WTC11 (cell line): ENCODE measurements at regions of chr12 and their contacts with region 1.

Region 1: GRCh38 chr12:121483949-121484348 is 84.0 kb downstream of the RNF34 start:
- DNase-seq: peak; percentile 17
- ATAC-seq: peak; percentile 38; the same call in 1 of the 2 replicates
- H3K4me3 Mint-ChIP-seq: no peak overlapping the region
- H3K27ac Mint-ChIP-seq: peak overlapping the region; percentile 44
- H3K4me1 Mint-ChIP-seq: peaks cover 8% of the 10 kb centered on the region
- H3K27me3 Mint-ChIP-seq: no peaks in the 10 kb centered on the region
- CTCF ChIP-seq: no peak

Region 2: DNA sequence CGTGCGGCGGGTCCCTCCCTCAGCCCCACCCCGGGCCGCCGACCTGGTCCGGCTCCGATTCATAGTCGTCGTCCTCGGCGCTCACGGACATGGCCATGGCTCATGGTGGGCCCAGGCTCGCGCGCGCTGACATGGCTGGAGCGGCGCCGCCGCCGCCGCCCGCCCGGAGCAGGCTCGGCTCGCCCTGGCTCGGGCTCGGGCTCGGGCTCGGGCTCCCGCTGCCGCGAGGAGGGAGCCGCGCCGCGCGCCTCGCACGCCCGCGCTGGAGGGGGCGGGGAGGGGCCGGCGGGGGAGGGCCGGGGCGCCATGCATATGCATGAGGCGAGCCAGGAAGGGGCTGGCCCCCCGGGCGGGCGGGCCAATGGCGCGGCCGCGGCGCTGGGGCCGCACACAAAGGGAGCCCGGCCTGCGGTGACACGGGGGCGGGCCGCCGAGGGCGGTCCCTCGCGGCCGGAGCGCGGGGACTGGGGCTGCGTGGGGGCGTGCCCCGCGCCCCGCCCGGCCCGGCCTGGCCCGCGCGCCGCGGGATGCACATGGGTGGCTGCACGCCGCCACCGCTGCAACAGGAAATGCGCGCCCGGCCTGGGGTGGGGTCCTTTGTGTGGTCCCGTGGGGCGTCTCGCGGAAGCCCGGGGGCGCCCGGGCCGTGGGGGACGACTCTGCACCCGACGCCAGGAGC is 16.7 kb before region 1 on chr12:
- CTCF ChIA-PET with region 1: interaction called, 43 read pairs
- POLR2A ChIA-PET with region 1: interaction called, 3 read pairs
- DNase-seq: peak; percentile 89
- ATAC-seq: peak; percentile 83
- H3K4me3 Mint-ChIP-seq: peak overlapping the region; percentile 56
- H3K27ac Mint-ChIP-seq: no peak overlapping the region
- H3K4me1 Mint-ChIP-seq: peaks cover 36% of the 10 kb centered on the region
- H3K27me3 Mint-ChIP-seq: no peaks in the 10 kb centered on the region
- CTCF ChIP-seq: no peak

Region 3: DNA sequence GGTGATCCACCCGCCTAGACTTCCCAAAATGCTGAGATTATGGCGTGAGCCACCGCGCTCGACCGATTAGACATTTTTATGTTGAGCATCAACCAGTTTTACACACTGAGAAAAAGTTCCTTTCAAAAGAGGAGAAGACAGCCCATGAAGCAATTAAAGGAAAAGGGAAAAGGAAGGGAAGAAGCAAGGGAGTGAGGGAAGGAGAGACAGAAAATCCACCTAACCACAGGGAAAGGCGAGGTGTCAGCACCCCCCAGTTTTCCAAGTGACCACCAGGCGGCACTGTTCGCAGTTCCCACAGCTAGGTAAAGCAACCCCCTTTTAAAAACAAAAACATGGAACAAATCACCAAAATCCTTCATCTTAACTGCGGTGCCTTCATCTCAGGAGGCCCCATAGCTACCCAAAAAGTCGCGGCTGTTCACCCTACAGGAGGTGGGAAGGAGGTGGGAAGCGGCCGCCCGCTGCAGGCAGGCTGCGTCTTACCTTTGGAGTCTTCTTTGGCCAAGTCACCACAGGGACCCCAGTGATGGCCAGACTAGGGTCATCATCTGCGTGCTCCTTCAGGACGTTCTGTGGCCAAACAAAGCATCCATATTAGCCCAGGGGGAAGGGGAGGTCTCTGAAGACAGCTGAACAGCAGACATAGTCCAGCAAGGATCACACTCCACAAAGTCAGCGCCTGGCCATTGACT is 10.3 kb after region 1 on chr12:
- CTCF ChIA-PET with region 1: interaction called, 13 read pairs
- POLR2A ChIA-PET with region 1: no interaction called
- DNase-seq: peak; percentile 84
- ATAC-seq: peak; percentile 78
- H3K4me3 Mint-ChIP-seq: no peak overlapping the region
- H3K27ac Mint-ChIP-seq: peak overlapping the region; percentile 88
- H3K4me1 Mint-ChIP-seq: peaks cover 17% of the 10 kb centered on the region
- H3K27me3 Mint-ChIP-seq: no peaks in the 10 kb centered on the region
- CTCF ChIP-seq: peak; percentile 90

Region 4: DNA sequence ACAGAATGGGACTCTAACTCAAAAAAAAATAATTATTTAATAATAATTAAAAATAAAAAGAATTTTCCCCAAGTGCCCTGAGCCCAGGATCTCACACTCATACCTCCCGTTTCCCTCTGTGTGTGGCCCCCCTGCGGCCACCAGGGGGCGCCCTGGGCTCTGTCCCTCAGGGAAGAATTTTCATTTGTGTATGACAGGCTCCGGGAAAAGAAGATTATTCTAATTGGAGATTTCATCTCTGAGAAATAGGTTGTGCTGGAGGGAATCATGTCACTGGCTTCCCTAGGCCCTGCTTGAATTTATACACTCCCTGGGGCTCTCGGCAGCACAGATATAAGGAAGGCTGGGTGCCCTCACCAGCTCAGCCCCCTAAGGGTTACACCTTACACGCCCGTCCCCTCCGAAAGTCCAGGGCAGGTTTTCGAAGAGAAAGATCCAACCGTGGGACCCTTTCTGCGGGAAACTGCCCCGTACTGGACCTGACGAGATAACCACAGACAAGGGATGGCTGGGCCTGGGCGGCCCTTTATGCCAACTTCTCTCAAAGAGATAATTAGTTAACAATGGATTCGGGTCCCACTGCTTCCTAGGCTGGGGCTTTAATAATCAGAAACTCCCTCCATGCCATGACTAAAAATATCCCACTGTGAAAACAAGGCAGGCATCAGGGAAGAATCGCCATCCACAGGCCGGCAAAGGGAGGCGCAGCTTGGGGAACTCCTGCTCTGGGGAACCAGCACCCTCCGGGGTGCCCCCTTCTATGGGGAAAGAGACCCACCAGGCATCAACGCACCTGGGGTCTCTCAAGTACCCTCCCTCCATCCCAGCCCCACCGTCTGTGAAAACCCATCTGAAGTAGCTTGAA is 16.2 kb after region 1 on chr12:
- CTCF ChIA-PET with region 1: interaction called, 13 read pairs
- POLR2A ChIA-PET with region 1: no interaction called
- DNase-seq: peak; percentile 79
- ATAC-seq: peak; percentile 77
- H3K4me3 Mint-ChIP-seq: no peak overlapping the region
- H3K27ac Mint-ChIP-seq: peak overlapping the region; percentile 85
- H3K4me1 Mint-ChIP-seq: peaks cover 8% of the 10 kb centered on the region
- H3K27me3 Mint-ChIP-seq: no peaks in the 10 kb centered on the region
- CTCF ChIP-seq: peak; percentile 96

Region 5: GRCh38 chr12:121579981-121580868 is 96.3 kb after region 1 on chr12:
- CTCF ChIA-PET with region 1: interaction called, 11 read pairs
- POLR2A ChIA-PET with region 1: no interaction called
- DNase-seq: peak; percentile 81
- ATAC-seq: peak; percentile 7; the same call in 1 of the 2 replicates
- H3K4me3 Mint-ChIP-seq: peak overlapping the region; percentile 99
- H3K27ac Mint-ChIP-seq: peak overlapping the region; percentile 100
- H3K4me1 Mint-ChIP-seq: peaks cover 46% of the 10 kb centered on the region
- H3K27me3 Mint-ChIP-seq: no peaks in the 10 kb centered on the region
- CTCF ChIP-seq: no peak

Region 6: DNA sequence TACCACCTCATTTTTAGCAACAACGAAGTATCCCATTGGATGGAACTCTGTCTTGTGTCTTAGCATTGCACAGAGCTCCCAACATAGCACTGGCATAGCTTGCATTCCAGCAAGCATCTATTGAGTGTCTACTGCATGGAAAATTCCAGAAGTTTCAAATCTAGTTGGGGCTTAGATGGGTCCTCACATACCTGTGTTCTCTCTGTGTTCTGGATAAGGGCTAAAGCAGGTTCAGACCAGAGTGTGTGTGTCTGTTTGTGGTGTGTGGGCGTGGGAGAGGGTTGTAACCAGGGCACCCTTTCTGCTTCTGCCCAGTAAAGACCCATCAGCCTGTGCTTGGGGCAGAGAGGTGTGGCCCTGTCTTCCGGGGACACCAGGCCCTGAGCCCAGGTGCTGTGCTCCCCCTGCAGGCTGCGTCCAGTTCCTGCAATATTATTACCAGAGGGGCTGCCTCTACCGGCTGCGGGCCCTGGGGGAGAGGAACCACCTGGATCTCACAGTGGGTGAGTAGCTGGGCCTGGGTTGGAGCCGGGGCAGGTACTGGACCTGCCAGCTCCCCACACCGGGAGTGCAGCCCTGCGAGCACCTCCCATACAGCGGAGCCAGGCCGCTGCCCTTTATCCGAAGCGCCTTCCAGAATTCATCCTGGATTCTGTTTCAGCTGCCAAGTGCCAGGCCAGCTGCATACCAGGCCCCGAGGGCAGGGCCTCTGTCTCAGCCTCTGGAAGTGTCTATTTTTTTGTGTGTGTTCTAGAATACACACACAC is 289.2 kb after region 1 on chr12:
- CTCF ChIA-PET with region 1: interaction called, 10 read pairs
- POLR2A ChIA-PET with region 1: no interaction called
- DNase-seq: peak; percentile 88
- ATAC-seq: peak; percentile 77
- H3K4me3 Mint-ChIP-seq: no peak overlapping the region
- H3K27ac Mint-ChIP-seq: peak overlapping the region; percentile 72
- H3K4me1 Mint-ChIP-seq: peaks cover 16% of the 10 kb centered on the region
- H3K27me3 Mint-ChIP-seq: no peaks in the 10 kb centered on the region
- CTCF ChIP-seq: peak; percentile 77